ENCODE measurements at regions of chr3 and their contacts with region 1.

Region 1: DNA sequence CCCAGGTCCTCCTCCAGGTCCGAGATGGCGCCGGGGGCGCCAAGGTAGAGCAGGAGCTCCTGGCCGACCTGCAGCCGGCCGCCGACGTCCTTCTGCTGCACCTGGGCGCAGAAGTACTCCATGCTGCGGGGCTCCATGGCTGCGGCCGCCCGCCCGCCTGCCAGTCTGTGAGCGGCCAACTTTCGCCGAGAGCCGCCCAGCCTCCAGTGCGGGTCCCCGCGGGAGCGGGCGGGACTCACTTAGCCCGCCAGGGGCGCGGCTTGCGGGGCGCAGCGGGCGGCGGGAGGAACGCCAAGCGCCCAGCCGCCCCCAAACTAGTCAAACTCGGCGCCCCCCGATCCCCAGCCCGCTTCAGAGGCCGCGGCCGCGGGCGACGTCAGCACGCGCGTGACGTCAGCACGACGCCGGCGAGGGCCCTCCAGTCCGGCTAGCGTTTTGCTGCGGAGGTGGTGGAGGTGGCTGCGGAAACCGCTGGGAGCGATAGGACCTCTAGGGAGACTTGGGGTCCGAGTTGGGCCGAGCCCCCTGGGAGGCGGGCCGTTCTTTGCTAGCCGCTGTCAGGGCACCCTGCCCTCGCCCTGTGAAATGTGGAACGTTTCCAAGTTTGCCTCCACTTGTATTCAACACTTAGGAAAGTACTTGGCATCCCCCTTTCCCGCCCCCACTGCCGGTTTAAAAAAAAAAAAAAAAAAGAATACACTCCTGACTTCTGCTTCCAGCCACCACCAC is at the start of gene CLASP2:
- DNase-seq: peak; percentile 95
- total RNA-seq, gene CLASP2: 75.3 to 145 TPM

Region 2: DNA sequence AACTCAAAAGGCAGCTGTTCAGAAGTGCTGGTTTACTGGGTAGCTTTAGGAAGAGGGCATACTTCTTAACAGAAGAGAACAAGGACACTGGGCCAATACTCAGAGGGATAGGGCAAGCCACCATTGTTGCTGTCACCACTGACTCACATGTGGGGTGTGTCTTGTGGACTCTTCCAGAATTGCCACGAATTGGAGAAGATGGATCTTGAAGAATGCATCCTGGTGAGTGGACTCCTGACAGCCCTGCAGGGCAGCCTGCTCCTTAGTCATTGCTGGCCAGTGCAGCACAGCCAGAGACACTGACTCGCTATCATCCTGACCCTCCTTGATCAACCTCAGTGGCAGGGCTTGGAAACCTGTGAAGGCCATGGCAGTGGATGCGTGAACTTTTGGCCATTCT is 340.1 kb before region 1 on chr3:
- intact Hi-C with region 1: no loop called
- DNase-seq: no peak

Region 3: DNA sequence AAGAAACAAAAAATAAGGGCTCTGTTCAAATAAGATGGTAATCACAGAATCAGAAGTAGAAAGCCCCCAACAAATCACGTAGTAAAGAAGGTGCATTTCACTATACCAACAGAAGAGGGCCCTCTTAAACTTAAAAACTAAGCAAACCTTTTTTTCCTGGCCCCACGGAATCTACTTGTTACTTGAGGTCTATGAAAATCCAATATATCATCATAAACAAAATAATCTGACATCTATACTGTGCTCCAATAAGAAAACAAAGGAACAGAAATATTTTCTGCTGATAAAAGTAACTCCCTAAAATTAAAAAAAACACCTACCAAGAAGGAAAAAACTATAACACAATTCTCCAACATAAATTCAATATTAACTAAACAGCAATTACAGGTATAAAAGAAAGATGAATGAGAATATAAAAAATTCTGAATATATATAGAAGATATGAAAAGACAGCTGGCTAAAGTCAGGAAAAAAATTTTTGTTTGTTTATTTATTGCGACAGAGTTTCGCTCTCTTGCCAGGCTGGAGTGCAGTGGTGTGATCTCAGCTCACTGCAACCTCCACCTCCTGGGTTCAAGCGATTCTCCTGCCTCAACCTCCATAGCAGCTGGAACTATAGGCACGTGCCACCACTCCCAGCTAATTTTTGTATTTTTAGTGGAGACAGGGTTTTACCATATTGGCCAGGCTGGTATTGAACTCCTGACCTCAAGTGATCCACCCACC is 81.7 kb before region 1 on chr3:
- intact Hi-C with region 1: loop called (anchors 10 kb)
- DNase-seq: no peak

Region 4: GRCh38 chr3:33645060-33645647 is 72.9 kb before region 1 on chr3:
- intact Hi-C with region 1: loop called in 1 of 2 experiments (anchors 10 kb)
- DNase-seq: no peak

Region 5: DNA sequence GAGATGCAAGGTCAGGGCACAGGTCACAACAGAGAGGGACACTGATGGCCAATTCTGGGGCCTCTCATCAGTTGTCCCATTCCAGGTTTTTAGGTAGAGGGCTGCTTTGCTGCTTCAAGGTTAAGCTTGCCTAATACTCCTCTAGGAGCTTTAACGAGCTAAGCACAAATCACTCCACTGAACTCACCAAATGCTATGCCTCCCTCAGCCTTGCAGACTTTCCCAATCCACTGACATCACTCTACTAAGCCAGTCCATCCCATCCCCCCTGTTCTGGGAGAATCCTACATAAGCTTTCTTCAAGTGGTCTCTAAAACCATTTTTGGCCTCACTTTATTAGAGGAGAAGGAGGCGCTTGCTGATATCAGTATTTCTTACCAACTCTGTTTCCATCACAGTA is 55.6 kb after region 1 on chr3:
- intact Hi-C with region 1: loop called in 1 of 2 experiments (anchors 10 kb)
- DNase-seq: no peak

Region 6: DNA sequence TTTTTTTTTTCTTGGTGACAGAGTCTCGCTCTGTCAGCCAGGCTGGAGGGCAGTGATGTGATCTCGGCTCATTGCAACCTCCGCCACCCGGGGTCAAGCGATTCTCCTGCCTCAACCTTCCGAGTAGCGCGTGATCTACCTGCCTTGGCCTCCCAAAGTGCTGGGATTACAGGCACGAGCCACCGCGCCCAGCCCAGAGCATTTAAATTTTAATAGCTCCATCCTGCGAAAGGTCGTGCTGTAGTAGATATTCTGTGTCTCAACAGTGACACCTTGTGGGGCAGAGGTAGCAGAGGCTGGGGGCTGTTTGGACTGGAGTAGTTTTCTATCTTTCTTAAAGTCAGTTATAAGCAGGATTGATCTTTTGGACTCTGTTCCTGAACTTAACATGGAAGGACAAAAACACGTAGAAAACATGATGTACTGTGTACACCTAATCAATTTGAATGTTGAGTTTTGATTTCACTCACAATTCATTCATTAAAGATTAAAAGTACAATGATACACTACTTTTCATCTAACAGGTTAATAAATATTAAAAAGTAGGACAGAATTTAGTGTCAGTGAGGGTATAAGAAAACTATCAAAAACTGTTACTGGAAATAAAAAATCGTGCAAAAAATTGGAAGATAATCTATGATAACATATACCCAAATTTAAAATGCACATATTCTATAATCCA is 69.4 kb after region 1 on chr3:
- intact Hi-C with region 1: loop called in 1 of 2 experiments (anchors 10 kb)
- DNase-seq: peak; percentile 78